ENCODE measurements at regions of chr18 and their contacts with region 1.

Region 1: DNA sequence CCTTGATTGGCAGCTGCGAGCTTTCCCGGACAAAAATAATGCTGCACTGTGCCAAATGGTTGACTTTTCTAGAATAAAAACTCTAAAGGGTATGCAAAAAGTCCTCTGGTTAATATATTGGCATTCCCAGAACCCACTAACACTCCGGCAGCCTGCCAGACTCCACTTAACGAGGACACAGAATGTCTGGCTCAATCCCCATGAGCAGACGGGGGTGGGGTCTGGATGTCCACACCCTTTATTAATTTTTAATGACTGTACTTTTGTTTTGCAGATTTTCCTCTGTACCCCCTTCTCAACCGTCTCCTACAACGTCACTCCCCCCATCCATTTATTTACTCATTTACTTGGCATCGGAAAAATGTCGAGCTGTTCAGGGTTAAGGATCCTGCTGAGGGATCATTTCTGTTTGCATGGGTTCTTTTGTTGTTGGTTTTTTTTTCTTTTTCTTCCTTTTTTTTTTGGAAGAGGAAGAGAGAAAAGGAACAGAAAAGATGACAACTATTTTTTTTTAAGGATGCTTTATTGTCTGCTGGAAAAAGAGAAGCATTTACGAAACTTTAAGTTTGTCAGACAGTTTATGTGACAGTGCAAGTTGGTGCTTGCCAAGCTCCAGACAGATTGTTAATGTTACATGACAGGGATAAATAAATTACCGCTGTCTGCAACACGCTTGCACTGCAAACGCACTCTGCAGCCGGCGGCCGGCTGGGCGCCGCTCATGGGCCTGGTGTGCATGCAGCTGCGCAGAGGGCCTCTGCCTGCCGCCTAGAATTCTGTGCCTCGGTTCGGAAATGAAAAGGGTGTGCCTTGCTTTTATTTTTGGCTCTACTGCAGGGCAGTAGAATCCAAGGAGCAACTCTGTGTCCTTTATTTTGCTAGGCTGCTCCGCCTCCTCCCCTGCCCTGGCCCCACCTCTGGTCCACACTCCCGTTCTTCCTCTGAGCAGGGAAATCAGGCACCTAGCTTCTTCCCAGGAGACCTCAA is 3.6 kb downstream of the LDLRAD4 start:
- DNase-seq: peak; percentile 73 to 78
- ATAC-seq: peak; percentile 41

Region 2: GRCh38 chr18:13318731-13319501 is 96.8 kb after region 1 on chr18:
- intact Hi-C with region 1: no loop called
- DNase-seq: no peak
- ATAC-seq: no peak

Region 3: GRCh38 chr18:13541621-13542519 is 319.7 kb after region 1 on chr18:
- intact Hi-C with region 1: loop called in 1 of 2 experiments (anchors 5 kb)
- DNase-seq: peak; percentile 67 to 75
- ATAC-seq: peak; percentile 79